Left cardiac atrium (tissue), 4 donors: ENCODE measurements at regions of chr1 and their contacts with region 1.

Region 1: DNA sequence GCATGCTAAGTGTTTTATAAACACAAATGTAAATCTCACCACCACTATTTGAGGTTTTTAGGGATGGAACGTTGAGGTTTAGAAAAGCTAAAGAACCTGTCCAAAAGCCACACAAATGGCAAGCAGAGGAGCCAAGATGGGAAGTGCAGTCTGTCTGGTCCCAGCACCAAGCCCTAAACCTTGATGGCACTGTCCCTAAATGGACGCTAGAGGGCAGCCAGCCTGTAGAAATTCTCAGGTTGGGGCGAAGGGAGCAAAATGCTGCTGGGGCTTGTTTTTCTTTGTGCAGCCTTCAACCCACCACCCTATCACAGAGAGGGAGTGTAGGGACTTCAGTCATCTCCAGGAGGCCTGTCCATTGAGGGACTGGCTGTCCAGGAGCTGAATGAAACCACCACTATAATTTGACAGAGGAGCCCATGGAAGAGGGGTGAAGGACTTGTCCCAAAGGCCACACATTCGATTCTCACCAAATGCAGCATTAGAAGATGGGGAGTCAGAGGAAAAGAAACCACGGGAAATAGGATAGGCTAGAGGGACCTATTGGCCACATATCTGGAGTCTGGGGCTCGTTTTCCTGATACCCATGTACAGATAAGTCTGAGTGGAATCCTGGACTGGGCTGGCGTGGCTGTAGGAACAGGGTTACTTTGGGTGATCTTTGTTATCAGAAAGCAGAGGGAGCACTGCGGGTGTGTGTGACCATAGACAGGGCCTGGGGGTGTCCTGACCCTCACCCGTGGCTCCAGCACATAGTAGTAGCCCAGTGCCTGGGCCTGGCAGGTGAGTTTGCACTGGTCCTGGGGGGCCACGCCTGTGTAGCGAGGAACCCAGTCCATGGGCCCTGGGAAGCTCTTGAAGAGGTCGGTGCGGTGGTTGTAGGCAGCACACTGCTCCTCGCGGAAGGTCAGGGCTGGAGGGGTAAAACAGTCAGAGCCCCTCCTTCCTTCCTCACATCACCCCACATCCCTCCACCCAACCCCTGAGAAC is 6.1 kb downstream of the ADAMTS4 start:
- DNase-seq: peak; percentile 67
- ATAC-seq: peak; percentile 44 to 53

Region 2: GRCh38 chr1:161117759-161118581 is 74.8 kb before region 1 on chr1 and contains the starts of genes NIT1 and PFDN2:
- intact Hi-C with region 1: no loop called
- DNase-seq: peak; percentile 90
- ATAC-seq: peak; percentile 94
- total RNA-seq, gene NIT1: 21.8 to 27.6 TPM
- total RNA-seq, gene PFDN2: 50.5 to 63.7 TPM

Region 3: DNA sequence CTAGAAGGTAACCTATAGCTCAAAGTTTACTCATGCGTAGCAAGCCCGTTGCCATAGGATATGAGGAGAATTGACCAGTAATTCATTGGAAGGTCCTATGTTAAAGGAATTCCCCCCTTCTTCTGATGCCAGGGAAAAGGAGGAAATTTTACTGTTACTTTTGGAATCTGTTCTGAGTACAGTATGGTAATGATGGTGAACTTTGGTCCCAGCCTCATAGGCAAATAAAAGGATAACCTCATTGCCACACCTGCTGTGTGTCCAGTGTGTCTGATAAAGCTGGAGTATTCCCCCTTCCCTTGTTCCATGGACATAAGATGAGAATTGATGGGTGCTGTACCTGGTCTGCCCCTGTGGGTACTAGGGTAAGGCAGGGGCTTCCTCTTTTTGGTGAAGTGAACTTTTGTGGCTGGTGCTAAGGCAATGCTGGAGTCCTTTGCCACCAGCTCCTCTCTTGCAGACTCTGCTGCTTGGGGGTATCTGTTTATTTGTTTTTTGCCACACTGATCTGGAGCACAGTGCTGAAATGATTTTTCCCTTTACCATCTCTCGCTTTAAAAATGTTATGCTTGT is 94.8 kb after region 1 on chr1:
- intact Hi-C with region 1: no loop called
- DNase-seq: no peak
- ATAC-seq: no peak

Region 4: GRCh38 chr1:161374373-161374772 is 181.6 kb after region 1 on chr1:
- intact Hi-C with region 1: loop called in 1 of 2 experiments (anchors 10 kb)
- DNase-seq: no peak
- ATAC-seq: no peak

Region 5: GRCh38 chr1:161389691-161390558 is 197.2 kb after region 1 on chr1:
- intact Hi-C with region 1: loop called in 1 of 2 experiments (anchors 10 kb)
- DNase-seq: peak; percentile 98
- ATAC-seq: peak; percentile 95